ENCODE measurements at regions of chr13 and their contacts with region 1.

Region 1: DNA sequence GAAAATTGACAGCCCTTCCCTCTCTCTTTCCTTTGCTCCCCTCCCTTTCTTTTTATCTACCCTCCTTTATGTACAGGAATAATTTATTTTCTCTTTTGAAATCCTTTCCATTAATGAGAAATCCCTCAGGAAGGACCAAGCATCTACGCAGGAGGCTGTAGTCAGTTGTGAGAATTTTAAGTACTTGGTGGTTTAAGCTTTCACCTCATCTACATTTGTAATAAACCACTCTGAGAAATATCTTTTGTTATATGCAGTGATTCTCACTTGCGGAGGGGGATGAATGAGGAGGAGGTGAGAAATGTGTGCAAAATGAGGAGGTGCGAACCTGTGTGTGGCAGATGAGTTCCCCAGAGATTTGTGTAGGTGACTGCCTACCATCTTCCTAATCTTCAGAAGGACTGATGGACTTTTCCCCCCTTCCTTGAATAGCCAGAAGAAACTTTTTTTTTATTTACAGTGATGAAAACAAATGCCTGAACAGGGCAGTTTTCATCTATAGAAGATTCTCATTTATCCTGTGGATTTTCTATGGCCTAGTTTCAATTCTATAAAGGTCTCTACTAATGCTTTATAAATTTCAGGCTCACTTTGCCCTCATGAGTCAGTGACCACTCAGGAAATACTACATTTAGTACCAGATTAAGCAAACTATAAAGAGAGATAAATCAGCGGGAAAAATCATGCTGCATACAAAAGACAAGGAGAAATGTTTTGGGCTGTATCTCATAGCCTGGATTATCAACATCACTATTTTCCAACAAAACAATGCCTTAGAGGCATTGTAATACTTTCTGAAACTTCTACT is 118.3 kb downstream of the LHFPL6 start:
- DNase-seq: peak; percentile 77
- ATAC-seq: peak; percentile 58; the same call in 1 of the 2 replicates
- H3K4me3 ChIP-seq: no peak overlapping the region
- H3K27ac ChIP-seq: peak overlapping the region; percentile 45; the same call in 1 of the 2 replicates
- H3K4me1 ChIP-seq: peaks cover 10% of the 10 kb centered on the region
- H3K27me3 ChIP-seq: no peaks in the 10 kb centered on the region
- CTCF ChIP-seq: no peak
- POLR2A ChIP-seq: no peak
- RAD21 ChIP-seq: no peak

Region 2: DNA sequence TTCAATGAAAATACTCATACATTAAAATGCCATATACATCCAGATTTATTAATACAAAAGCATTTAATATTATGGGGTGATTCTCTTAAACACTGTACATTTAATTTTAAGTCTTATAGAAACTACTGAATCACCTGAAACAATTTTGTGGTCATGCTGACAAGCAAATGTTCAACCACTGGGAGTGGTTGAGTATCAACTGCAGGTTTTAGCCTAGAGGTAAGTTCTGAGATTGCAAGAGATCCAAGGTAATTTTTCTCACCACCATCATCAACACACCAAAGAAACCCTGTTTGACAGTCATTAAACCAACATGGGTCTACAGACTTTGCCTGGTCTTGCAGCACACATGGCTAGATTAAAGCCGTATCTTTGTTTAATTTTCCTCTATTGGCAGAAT is 78.0 kb before region 1 on chr13:
- CTCF ChIA-PET with region 1: no interaction called
- POLR2A ChIA-PET with region 1: no interaction called
- dilution Hi-C with region 1: no loop called
- in situ Hi-C with region 1: no loop called
- intact Hi-C with region 1: loop called (anchors 5 kb)
- DNase-seq: no peak
- ATAC-seq: no peak
- H3K4me3 ChIP-seq: no peak overlapping the region
- H3K27ac ChIP-seq: no peak overlapping the region
- H3K4me1 ChIP-seq: peaks cover 4% of the 10 kb centered on the region; the same call in 1 of the 2 replicates
- H3K27me3 ChIP-seq: no peaks in the 10 kb centered on the region
- CTCF ChIP-seq: no peak
- POLR2A ChIP-seq: no peak
- RAD21 ChIP-seq: no peak

Region 3: DNA sequence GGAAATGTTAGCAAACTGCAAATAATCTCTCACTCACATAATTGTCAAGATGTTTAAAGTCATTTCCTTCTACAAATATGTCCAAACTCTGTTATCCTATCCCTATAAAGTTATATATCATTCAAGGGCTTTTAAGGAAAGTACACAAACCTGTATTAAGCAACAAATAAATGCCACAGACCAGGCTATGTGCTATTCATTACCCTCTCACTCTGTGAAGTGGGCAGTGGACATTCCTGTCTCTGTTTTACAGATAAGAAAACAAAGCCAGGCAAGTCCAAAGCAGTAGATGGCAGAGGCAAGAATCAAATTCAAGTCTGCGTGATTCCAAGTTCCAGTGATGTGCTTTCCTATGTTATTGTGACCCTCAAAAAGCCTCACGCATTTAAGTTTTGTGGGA is 22.3 kb before region 1 on chr13:
- CTCF ChIA-PET with region 1: interaction called, 3 read pairs
- POLR2A ChIA-PET with region 1: no interaction called
- dilution Hi-C with region 1: no loop called
- in situ Hi-C with region 1: no loop called
- intact Hi-C with region 1: loop called (anchors 2 kb)
- DNase-seq: no peak
- ATAC-seq: peak; percentile 55
- H3K4me3 ChIP-seq: no peak overlapping the region
- H3K27ac ChIP-seq: peak overlapping the region; percentile 72; the same call in 1 of the 2 replicates
- H3K4me1 ChIP-seq: peaks cover 8% of the 10 kb centered on the region
- H3K27me3 ChIP-seq: no peaks in the 10 kb centered on the region
- CTCF ChIP-seq: no peak
- POLR2A ChIP-seq: no peak
- RAD21 ChIP-seq: no peak

Measured in IMR-90 (cell line).